ENCODE measurements at regions of chr21 and their contacts with region 1.

Region 1: DNA sequence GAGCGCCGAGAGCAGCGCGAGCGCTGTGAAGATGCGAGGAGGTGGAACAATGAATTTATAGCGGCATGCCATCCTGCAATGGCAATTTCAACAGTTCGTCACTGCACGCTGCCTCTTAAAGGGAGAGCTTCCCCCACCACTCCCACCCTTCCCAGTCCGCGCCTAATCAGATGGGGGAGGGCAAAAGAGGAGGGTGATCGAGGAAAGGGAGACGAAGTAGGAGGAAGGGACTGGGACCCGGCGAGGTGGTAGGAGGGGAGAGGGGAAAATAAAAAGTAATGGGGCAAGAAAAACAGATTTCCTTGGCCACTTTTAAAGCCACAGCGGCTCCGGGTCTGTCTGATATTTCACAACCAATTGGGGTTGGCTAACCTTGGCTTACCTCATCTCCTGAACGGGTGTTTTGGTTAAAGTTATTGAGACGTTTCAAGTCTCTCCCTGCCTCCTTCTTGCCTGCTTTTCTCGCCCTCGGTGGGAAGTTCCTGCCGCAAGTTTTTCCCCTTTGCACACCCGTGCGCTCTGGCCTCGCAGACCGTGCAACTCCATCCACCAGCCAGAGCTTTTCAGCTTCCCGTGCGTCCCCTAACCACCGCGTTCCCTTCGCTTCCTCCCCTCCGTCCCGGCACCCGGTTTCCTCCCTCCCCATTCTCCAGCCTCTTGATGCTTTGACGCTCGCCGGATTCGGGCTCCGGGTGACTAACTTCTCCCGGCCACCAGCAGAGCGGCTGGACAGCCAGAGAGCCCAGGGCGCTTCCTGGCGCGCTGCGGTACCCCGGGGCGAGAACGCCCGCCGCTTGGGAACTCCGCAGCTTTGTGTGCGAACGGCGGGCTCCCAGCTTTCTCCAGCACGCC is at the start of gene ADAMTS5:
- DNase-seq: peak; percentile 69 to 75 (median 72)
- H3K4me3 ChIP-seq: peak within 1 kb of the TSS; percentile 67
- H3K27ac ChIP-seq: peak within 1 kb of the TSS; percentile 70 to 94
- H3K4me1 ChIP-seq: peaks cover 5% of the 10 kb centered on the region
- H3K27me3 ChIP-seq: no peaks in the 10 kb centered on the region
- CTCF ChIP-seq: no peak
- EP300 ChIP-seq: no peak
- POLR2A ChIP-seq: peak; percentile 45
- total RNA-seq, gene ADAMTS5: 9.2 to 33.2 (median 21.0) TPM

Region 2: GRCh38 chr21:26756491-26757159 is 210.7 kb before region 1 on chr21:
- intact Hi-C with region 1: no loop called
- DNase-seq: no peak
- H3K4me3 ChIP-seq: no peak overlapping the region
- H3K27ac ChIP-seq: no peak overlapping the region
- H3K4me1 ChIP-seq: no peaks in the 10 kb centered on the region
- H3K27me3 ChIP-seq: no peaks in the 10 kb centered on the region
- CTCF ChIP-seq: no peak
- EP300 ChIP-seq: no peak
- POLR2A ChIP-seq: no peak

Region 3: DNA sequence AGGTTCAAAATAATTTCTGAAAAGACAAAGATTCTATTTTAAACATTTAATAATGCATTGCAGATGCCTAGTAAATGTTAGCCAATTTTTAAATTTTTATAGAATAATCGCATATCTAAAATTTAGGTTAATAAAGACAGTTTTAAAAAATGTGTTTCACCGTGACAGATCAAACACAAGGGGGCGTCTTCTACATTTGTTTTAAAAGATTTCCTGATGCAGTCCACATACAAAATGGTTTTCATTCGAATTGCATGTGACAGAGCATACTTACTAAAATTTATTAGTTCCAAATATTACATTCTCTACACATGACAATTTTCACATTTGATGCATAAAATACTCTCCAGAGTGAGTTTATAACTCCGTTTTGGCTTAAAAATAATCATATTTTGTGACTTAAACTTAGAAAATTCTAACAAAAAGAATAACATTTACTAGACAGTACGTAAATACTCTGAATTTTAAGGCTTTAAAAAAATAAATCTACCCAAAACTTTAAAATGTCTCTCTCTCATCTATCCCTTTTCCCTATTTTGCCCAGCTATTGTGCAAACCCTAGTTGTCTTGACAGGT is 197.6 kb before region 1 on chr21:
- intact Hi-C with region 1: loop called in 1 of 4 experiments (anchors 10 kb)
- DNase-seq: no peak
- H3K4me3 ChIP-seq: no peak overlapping the region
- H3K27ac ChIP-seq: no peak overlapping the region
- H3K4me1 ChIP-seq: no peaks in the 10 kb centered on the region
- H3K27me3 ChIP-seq: no peaks in the 10 kb centered on the region
- CTCF ChIP-seq: peak; percentile 57 to 78 (median 70)
- EP300 ChIP-seq: no peak
- POLR2A ChIP-seq: no peak

Region 4: GRCh38 chr21:27026501-27026900 is 59.2 kb after region 1 on chr21:
- intact Hi-C with region 1: no loop called
- DNase-seq: no peak
- H3K4me3 ChIP-seq: no peak overlapping the region
- H3K27ac ChIP-seq: no peak overlapping the region
- H3K4me1 ChIP-seq: no peaks in the 10 kb centered on the region
- H3K27me3 ChIP-seq: no peaks in the 10 kb centered on the region
- CTCF ChIP-seq: no peak
- EP300 ChIP-seq: no peak
- POLR2A ChIP-seq: no peak

Region 5: DNA sequence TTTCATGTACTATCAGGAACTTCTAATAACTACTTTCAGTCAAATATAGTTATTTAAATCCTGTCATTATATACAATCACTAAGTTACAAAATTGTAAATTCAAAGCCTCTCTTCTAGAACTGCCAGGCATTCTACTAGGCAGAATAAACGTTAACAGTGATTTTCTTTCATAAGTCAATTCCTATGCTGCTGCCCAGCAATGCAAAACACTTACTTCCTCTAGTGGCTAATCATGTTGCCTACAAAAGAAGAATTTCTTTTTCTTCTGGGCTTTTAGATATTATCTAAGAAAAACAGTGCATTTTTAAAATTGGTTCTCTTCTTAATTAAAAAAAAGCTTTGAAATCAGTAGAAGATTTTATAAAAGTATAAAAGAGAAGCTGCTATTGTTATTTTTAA is 509.4 kb after region 1 on chr21:
- intact Hi-C with region 1: loop called in 1 of 4 experiments (anchors 10 kb)
- DNase-seq: peak in 1 of 5 donors; percentile 15
- H3K4me3 ChIP-seq: no peak overlapping the region
- H3K27ac ChIP-seq: no peak overlapping the region
- H3K4me1 ChIP-seq: peaks cover 2% of the 10 kb centered on the region
- H3K27me3 ChIP-seq: no peaks in the 10 kb centered on the region
- CTCF ChIP-seq: peak; percentile 49 to 69 (median 63)
- EP300 ChIP-seq: no peak
- POLR2A ChIP-seq: no peak

Region 6: DNA sequence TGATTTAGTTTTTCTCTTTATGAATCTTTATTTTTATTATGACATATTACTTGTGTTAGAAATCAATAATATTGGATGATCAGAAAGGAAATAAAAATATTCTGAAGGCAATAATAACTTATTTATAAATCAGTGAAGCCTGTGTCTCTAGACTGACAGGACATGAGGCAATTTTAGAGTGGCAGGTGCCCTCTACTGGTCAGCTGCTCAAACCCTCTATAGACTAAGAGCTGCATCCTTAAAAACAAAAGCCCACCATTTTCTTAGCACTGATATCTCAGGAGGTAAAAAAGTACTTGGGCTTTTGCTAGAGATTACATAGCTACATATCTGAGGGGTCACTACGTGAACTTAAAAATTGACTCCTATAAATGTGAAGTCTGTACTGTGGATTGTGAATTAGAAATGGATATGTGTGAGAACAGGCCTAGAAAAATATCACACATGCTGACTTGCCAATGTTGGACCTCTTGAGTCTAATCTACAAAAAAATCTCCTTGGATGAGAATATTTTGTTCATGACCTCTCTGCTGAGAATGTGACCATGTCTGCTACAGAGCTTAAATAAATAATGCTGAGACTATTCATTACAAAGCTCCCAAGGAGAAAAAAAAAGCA is 597.5 kb after region 1 on chr21:
- intact Hi-C with region 1: loop called in 1 of 4 experiments (anchors 10 kb)
- DNase-seq: peak in 4 of 5 donors; percentile 18 to 57 (median 28)
- H3K4me3 ChIP-seq: no peak overlapping the region
- H3K27ac ChIP-seq: no peak overlapping the region
- H3K4me1 ChIP-seq: peaks cover 2% of the 10 kb centered on the region
- H3K27me3 ChIP-seq: no peaks in the 10 kb centered on the region
- CTCF ChIP-seq: peak in 2 of 3 donors; percentile 36 to 39
- EP300 ChIP-seq: no peak
- POLR2A ChIP-seq: no peak